ENCODE measurements at regions of chr9 and their contacts with region 1.

Region 1: GRCh38 chr9:76704593-76705204 is 59.5 kb upstream of the PCA3 start:
- DNase-seq: peak in 3 of 9 experiments; percentile 7 to 76 (median 68)
- ATAC-seq: no peak
- H3K4me3 ChIP-seq: no peak overlapping the region
- H3K4me3 Mint-ChIP-seq: no peak overlapping the region
- H3K27ac ChIP-seq: no peak overlapping the region
- H3K27ac Mint-ChIP-seq: no peak overlapping the region
- H3K4me1 ChIP-seq: no peaks in the 10 kb centered on the region
- H3K4me1 Mint-ChIP-seq: peaks cover 4% of the 10 kb centered on the region
- H3K27me3 ChIP-seq: peaks cover 0 to 3% of the 10 kb centered on the region in 2 experiments
- H3K27me3 Mint-ChIP-seq: peaks cover 27% of the 10 kb centered on the region
- CTCF ChIP-seq: peak; percentile 61

Region 2: DNA sequence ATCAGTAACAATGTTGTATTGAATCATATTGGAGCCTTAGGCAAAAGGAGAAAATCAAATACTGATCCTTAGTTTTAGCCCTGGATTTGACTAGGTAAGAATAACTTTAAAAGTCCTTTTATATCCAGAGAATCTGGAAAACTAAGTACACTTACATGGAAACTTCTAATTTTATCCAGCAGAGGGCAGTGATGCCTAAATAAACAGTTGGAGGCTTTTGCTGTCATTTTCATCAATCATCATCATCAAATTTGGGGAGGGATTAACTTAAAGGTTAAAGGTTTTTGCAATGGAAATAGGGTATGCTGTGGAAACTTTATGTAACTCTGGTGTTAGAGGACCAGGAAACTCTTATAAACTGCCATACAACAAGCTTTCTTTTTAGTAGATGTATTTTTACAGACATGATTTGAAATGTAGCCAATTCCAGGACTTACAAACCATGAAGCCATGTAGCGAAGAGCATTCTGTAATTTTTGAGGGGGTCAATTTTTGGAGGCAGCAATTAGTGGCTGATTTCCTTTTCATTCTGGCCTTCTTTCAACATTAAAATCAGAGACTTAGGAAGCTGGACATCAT is 1503.7 kb before region 1 on chr9:
- CTCF ChIA-PET with region 1: interaction called, 3 read pairs
- POLR2A ChIA-PET with region 1: no interaction called
- intact Hi-C with region 1: loop called in 1 of 2 experiments (anchors 10 kb)
- DNase-seq: peak in 2 of 9 experiments; percentile 54 to 62
- ATAC-seq: no peak
- H3K4me3 ChIP-seq: no peak overlapping the region
- H3K4me3 Mint-ChIP-seq: no peak overlapping the region
- H3K27ac ChIP-seq: no peak overlapping the region
- H3K27ac Mint-ChIP-seq: no peak overlapping the region
- H3K4me1 ChIP-seq: no peaks in the 10 kb centered on the region
- H3K4me1 Mint-ChIP-seq: no peaks in the 10 kb centered on the region
- H3K27me3 ChIP-seq: no peaks in the 10 kb centered on the region
- H3K27me3 Mint-ChIP-seq: no peaks in the 10 kb centered on the region
- CTCF ChIP-seq: peak; percentile 65

Region 3: GRCh38 chr9:75265525-75265972 is 1439.2 kb before region 1 on chr9:
- CTCF ChIA-PET with region 1: no interaction called
- POLR2A ChIA-PET with region 1: no interaction called
- intact Hi-C with region 1: loop called in 1 of 2 experiments (anchors 10 kb)
- DNase-seq: peak in 7 of 9 experiments; percentile 19 to 61 (median 42)
- ATAC-seq: peak; percentile 58
- H3K4me3 ChIP-seq: no peak overlapping the region
- H3K4me3 Mint-ChIP-seq: no peak overlapping the region
- H3K27ac ChIP-seq: no peak overlapping the region
- H3K27ac Mint-ChIP-seq: no peak overlapping the region
- H3K4me1 ChIP-seq: no peaks in the 10 kb centered on the region
- H3K4me1 Mint-ChIP-seq: no peaks in the 10 kb centered on the region
- H3K27me3 ChIP-seq: no peaks in the 10 kb centered on the region
- H3K27me3 Mint-ChIP-seq: no peaks in the 10 kb centered on the region
- CTCF ChIP-seq: peak; percentile 96

Region 4: DNA sequence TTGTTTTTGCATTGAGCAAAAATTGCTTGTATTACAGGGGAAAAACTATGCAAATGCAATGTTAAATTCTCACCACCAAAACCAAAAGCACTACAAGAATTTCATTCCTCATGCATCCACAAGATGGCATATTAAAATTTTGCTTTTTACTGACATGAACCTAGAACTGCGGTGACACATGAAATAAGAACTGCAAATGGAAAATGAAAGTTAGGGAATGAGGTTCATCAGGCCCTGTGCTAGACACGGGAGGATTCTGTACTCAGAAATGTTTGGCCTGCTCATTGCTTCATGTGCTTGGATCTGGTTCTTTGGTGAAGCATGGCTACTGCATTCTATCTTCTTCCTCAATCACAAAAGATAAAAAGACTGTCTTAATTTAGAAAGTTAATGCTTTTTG is 301.3 kb before region 1 on chr9:
- CTCF ChIA-PET with region 1: interaction called, 13 read pairs
- POLR2A ChIA-PET with region 1: no interaction called
- intact Hi-C with region 1: loop called (anchors 1 to 2 kb)
- DNase-seq: peak in 3 of 9 experiments; percentile 15 to 79 (median 63)
- ATAC-seq: peak; percentile 96
- H3K4me3 ChIP-seq: peak overlapping the region in 1 of 2 experiments; percentile 5
- H3K4me3 Mint-ChIP-seq: peak overlapping the region; percentile 66
- H3K27ac ChIP-seq: peak overlapping the region in 1 of 2 experiments; percentile 20
- H3K27ac Mint-ChIP-seq: peak overlapping the region; percentile 71
- H3K4me1 ChIP-seq: peaks cover 5% of the 10 kb centered on the region
- H3K4me1 Mint-ChIP-seq: peaks cover 9% of the 10 kb centered on the region
- H3K27me3 ChIP-seq: no peaks in the 10 kb centered on the region
- H3K27me3 Mint-ChIP-seq: no peaks in the 10 kb centered on the region
- CTCF ChIP-seq: peak; percentile 61

Region 5: DNA sequence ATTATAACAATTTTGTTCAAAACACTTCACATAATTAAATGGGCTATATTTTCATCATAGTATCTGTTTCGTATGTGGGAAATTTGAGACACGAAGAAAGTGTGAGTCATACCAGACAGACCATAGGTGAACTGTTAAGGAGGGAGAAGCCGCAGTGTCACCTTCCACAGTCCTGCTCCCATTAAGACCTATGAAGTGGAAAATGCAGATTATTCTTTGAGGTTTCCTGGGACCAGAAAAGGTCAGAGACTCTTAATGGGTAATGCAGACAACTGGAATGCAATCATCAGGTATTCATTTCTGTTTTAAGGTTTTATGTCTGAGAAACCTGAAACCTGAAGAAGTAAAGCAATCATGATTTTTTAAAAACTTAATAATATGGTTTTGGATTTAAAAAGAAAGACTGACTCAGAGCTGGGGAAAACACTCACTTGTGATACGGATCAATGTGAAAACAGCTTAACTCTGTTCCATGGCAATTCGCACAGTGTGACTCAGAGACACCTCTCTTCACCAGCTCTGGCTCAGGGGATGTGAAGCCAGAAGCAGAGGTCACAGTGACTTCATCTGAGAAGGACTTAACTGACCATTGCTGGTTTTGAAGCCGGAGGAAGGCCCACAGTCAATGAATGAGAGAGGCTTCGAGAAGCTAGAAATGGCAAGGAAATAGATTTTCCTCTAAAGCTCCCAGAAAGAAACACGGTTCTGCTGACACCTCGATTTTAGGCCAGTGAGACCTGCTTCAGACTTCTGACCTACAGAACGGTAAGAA is 263.0 kb before region 1 on chr9:
- CTCF ChIA-PET with region 1: interaction called, 50 read pairs
- POLR2A ChIA-PET with region 1: no interaction called
- intact Hi-C with region 1: no loop called
- DNase-seq: no peak
- ATAC-seq: no peak
- H3K4me3 ChIP-seq: no peak overlapping the region
- H3K4me3 Mint-ChIP-seq: no peak overlapping the region
- H3K27ac ChIP-seq: no peak overlapping the region
- H3K27ac Mint-ChIP-seq: no peak overlapping the region
- H3K4me1 ChIP-seq: no peaks in the 10 kb centered on the region
- H3K4me1 Mint-ChIP-seq: peaks cover 2% of the 10 kb centered on the region
- H3K27me3 ChIP-seq: no peaks in the 10 kb centered on the region
- H3K27me3 Mint-ChIP-seq: no peaks in the 10 kb centered on the region
- CTCF ChIP-seq: no peak

Region 6: DNA sequence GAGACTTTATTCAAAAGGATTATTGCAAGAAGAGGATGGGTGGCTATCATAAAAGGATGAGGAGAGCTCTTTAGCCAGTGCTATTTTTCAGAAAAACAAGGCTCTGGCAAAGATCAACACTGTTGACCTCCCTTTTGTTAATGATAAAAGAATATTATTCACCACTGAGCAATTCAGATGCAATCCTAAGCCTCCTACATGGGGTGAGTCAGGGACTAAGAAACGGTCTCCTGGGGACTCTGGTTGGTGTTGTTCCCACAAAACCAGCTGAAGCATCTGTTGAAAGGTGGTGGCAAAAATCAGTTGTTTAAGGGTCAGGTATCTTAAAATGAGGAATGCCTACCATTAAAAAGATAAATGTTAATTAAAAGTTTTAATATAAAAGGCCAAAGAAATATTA is 253.5 kb before region 1 on chr9:
- CTCF ChIA-PET with region 1: interaction called, 50 read pairs
- POLR2A ChIA-PET with region 1: interaction called, 3 read pairs
- intact Hi-C with region 1: loop called in 1 of 2 experiments (anchors 1 kb)
- DNase-seq: no peak
- ATAC-seq: no peak
- H3K4me3 ChIP-seq: no peak overlapping the region
- H3K4me3 Mint-ChIP-seq: no peak overlapping the region
- H3K27ac ChIP-seq: no peak overlapping the region
- H3K27ac Mint-ChIP-seq: no peak overlapping the region
- H3K4me1 ChIP-seq: no peaks in the 10 kb centered on the region
- H3K4me1 Mint-ChIP-seq: peaks cover 4% of the 10 kb centered on the region
- H3K27me3 ChIP-seq: no peaks in the 10 kb centered on the region
- H3K27me3 Mint-ChIP-seq: peaks cover 3% of the 10 kb centered on the region
- CTCF ChIP-seq: no peak

Region 7: DNA sequence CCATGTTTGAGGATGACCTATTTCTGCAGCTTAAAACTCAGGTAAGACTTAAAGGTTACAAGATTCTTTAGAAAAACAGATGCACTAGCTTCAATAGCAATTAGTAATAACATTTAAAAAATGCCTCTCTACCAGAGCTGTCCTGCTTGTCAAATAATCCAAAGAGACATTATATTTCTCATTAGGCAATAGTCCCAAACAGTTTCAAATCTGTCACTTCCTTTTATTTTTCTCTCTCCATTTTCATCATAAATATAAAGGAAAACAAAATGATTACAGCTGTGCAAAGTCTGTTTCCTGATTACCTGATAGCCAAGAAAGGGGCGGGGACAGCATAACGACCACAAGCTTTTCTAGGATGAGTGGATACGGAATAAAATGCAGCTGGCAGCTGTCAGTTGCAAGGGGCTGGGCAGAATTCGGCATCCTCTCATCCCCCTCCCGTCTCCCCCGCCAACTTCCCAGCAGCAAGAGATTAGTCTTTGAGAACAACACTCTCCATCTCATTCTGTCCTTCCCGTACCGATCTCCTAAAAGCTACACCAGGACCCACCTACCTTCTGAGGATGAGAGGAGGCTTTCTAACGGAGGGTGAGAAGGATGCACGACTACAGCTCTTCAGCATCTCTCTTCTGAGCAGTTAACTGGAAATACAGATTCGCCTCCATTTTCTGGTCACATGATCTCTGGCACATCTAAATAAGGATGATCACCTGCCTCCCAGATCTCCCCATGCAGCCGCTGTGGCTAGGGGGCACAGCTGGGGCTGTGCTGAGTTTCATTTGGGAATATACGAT is 13.0 kb before region 1 on chr9:
- CTCF ChIA-PET with region 1: interaction called, 13 read pairs
- POLR2A ChIA-PET with region 1: no interaction called
- intact Hi-C with region 1: no loop called
- DNase-seq: peak in 1 of 9 experiments; percentile 5
- ATAC-seq: no peak
- H3K4me3 ChIP-seq: peak overlapping the region in 1 of 2 experiments; percentile 23
- H3K4me3 Mint-ChIP-seq: peak overlapping the region; percentile 68
- H3K27ac ChIP-seq: no peak overlapping the region
- H3K27ac Mint-ChIP-seq: no peak overlapping the region
- H3K4me1 ChIP-seq: no peaks in the 10 kb centered on the region
- H3K4me1 Mint-ChIP-seq: peaks cover 7% of the 10 kb centered on the region
- H3K27me3 ChIP-seq: no peaks in the 10 kb centered on the region
- H3K27me3 Mint-ChIP-seq: peaks cover 32% of the 10 kb centered on the region
- CTCF ChIP-seq: no peak

Region 8: DNA sequence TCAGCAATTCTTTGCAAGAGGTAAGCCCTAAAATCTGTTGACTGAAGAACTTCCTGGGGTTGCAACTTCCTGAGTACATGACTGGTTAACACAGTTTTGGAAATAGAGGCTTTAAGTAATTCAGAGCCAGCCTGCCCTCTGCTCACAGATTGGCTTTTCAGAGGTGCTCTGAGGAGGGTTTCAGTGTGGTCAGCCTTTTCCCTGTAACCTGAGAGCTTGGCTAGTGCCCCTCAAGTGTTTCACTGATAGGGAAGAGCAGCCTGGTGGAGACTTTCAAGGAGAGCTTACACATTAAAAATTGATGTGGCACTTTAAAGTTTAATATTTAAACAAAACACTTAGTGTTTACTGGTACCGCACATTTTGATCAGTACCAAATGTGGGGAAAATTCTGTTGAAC is 258.0 kb after region 1 on chr9:
- CTCF ChIA-PET with region 1: no interaction called
- POLR2A ChIA-PET with region 1: no interaction called
- intact Hi-C with region 1: no loop called
- DNase-seq: no peak
- ATAC-seq: no peak
- H3K4me3 ChIP-seq: no peak overlapping the region
- H3K4me3 Mint-ChIP-seq: no peak overlapping the region
- H3K27ac ChIP-seq: no peak overlapping the region
- H3K27ac Mint-ChIP-seq: no peak overlapping the region
- H3K4me1 ChIP-seq: no peaks in the 10 kb centered on the region
- H3K4me1 Mint-ChIP-seq: no peaks in the 10 kb centered on the region
- H3K27me3 ChIP-seq: no peaks in the 10 kb centered on the region
- H3K27me3 Mint-ChIP-seq: peaks cover 9% of the 10 kb centered on the region
- CTCF ChIP-seq: no peak

Region 9: GRCh38 chr9:77000330-77000729 is 295.6 kb after region 1 on chr9:
- CTCF ChIA-PET with region 1: no interaction called
- POLR2A ChIA-PET with region 1: no interaction called
- intact Hi-C with region 1: no loop called
- DNase-seq: no peak
- ATAC-seq: no peak
- H3K4me3 ChIP-seq: no peak overlapping the region
- H3K4me3 Mint-ChIP-seq: no peak overlapping the region
- H3K27ac ChIP-seq: no peak overlapping the region
- H3K27ac Mint-ChIP-seq: no peak overlapping the region
- H3K4me1 ChIP-seq: no peaks in the 10 kb centered on the region
- H3K4me1 Mint-ChIP-seq: no peaks in the 10 kb centered on the region
- H3K27me3 ChIP-seq: no peaks in the 10 kb centered on the region
- H3K27me3 Mint-ChIP-seq: peaks cover 17% of the 10 kb centered on the region
- CTCF ChIP-seq: no peak

Region 10: GRCh38 chr9:77290373-77290772 is 585.7 kb after region 1 on chr9:
- CTCF ChIA-PET with region 1: no interaction called
- POLR2A ChIA-PET with region 1: no interaction called
- intact Hi-C with region 1: no loop called
- DNase-seq: no peak
- ATAC-seq: no peak
- H3K4me3 ChIP-seq: no peak overlapping the region
- H3K4me3 Mint-ChIP-seq: no peak overlapping the region
- H3K27ac ChIP-seq: no peak overlapping the region
- H3K27ac Mint-ChIP-seq: no peak overlapping the region
- H3K4me1 ChIP-seq: no peaks in the 10 kb centered on the region
- H3K4me1 Mint-ChIP-seq: peaks cover 3% of the 10 kb centered on the region
- H3K27me3 ChIP-seq: no peaks in the 10 kb centered on the region
- H3K27me3 Mint-ChIP-seq: no peaks in the 10 kb centered on the region
- CTCF ChIP-seq: no peak